Heart left ventricle (tissue), 16 donors: ENCODE measurements at regions of chr9 and their contacts with region 1.

Region 1: GRCh38 chr9:74742792-74743730 is 144.7 kb downstream of the TRPM6 start:
- DNase-seq: no peak
- ATAC-seq: peak in 1 of 4 donors; percentile 36
- H3K4me3 ChIP-seq: no peak overlapping the region
- H3K27ac ChIP-seq: no peak overlapping the region
- H3K4me1 ChIP-seq: peaks cover 0 to 5% (median 0%) of the 10 kb centered on the region in 12 donors
- H3K27me3 ChIP-seq: peaks cover 0 to 14% (median 0%) of the 10 kb centered on the region in 9 donors
- CTCF ChIP-seq: peak; percentile 39 to 79 (median 56)
- POLR2A ChIP-seq: no peak

Region 2: GRCh38 chr9:73200694-73201452 is 1542.2 kb before region 1 on chr9:
- intact Hi-C with region 1: loop called in 8 of 10 experiments (anchors 5 to 10 kb)
- DNase-seq: no peak
- ATAC-seq: no peak
- H3K4me3 ChIP-seq: no peak overlapping the region
- H3K27ac ChIP-seq: no peak overlapping the region
- H3K4me1 ChIP-seq: no peaks in the 10 kb centered on the region
- H3K27me3 ChIP-seq: peaks cover 0 to 19% (median 0%) of the 10 kb centered on the region in 9 donors
- CTCF ChIP-seq: peak; percentile 27 to 63 (median 50)
- POLR2A ChIP-seq: no peak

Region 3: GRCh38 chr9:73773896-73774295 is 969.2 kb before region 1 on chr9:
- intact Hi-C with region 1: no loop called
- DNase-seq: no peak
- ATAC-seq: no peak
- H3K4me3 ChIP-seq: no peak overlapping the region
- H3K27ac ChIP-seq: no peak overlapping the region
- H3K4me1 ChIP-seq: no peaks in the 10 kb centered on the region
- H3K27me3 ChIP-seq: no peaks in the 10 kb centered on the region
- CTCF ChIP-seq: no peak
- POLR2A ChIP-seq: no peak

Region 4: GRCh38 chr9:74666625-74667316 is 76.3 kb before region 1 on chr9:
- intact Hi-C with region 1: loop called in 1 of 10 experiments (anchors 10 kb)
- DNase-seq: no peak
- ATAC-seq: no peak
- H3K4me3 ChIP-seq: no peak overlapping the region
- H3K27ac ChIP-seq: no peak overlapping the region
- H3K4me1 ChIP-seq: no peaks in the 10 kb centered on the region
- H3K27me3 ChIP-seq: no peaks in the 10 kb centered on the region
- CTCF ChIP-seq: no peak
- POLR2A ChIP-seq: no peak

Region 5: DNA sequence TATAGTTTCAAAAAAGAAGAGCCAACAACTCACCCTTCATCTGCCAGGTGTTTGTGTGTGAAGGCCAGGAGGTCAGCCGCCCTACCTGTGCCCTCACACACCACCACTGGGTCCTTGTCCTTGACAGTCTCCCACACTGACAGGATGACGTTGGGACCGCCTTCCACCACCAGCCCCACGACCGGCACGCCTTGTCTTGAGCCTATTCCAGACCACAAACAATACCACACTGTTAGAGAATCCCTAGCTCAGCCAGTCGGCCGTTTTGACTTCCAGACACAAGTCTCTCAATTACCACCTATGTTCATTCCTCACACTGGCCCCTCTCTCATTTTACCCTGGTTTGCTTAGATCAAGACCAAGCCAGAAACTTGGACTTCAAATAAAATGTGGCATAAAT is 78.6 kb after region 1 on chr9:
- intact Hi-C with region 1: no loop called
- DNase-seq: no peak
- ATAC-seq: no peak
- H3K4me3 ChIP-seq: no peak overlapping the region
- H3K27ac ChIP-seq: no peak overlapping the region
- H3K4me1 ChIP-seq: peaks cover 0 to 6% (median 0%) of the 10 kb centered on the region in 12 donors
- H3K27me3 ChIP-seq: peaks cover 0 to 3% (median 0%) of the 10 kb centered on the region in 9 donors
- CTCF ChIP-seq: no peak
- POLR2A ChIP-seq: no peak

Region 6: DNA sequence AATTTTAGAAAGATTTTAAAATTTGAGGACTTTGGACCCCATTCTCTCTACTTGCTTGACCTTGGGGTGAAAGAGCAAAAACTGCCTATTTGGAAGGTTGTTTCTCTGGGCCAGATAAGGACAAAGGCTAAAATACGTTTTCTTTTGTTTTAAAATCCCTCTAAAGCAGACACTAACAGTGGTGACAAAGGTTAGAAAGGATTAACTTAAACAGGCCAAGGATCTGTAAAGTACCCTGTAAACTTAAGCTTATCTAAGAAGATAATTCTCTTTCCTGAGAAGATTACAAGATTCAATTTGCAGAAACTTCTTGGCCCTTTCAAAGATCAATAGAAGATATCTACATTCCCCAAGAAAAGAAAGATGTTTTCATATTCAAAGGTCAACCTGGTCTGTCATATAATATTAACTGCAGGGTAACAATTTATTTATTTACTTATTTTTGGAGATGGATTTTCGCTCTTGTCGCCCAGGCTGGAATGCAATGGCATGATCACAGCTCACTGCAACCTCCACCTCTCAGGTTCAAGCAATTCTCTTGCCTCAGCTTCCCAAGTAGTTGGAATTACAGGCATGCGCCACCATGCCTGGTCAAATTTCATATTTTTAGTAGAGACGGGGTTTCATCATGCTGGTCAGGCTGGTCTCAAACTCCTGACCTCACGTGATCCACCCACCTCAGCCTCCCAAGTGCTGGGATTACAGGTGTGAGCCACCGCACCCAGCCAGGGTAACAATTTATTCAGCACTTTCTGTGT is 132.8 kb after region 1 on chr9:
- intact Hi-C with region 1: no loop called
- DNase-seq: no peak
- ATAC-seq: no peak
- H3K4me3 ChIP-seq: no peak overlapping the region
- H3K27ac ChIP-seq: no peak overlapping the region
- H3K4me1 ChIP-seq: no peaks in the 10 kb centered on the region
- H3K27me3 ChIP-seq: no peaks in the 10 kb centered on the region
- CTCF ChIP-seq: no peak
- POLR2A ChIP-seq: no peak